H1 (cell line): ENCODE measurements at regions of chr15 and their contacts with region 1.

Region 1: DNA sequence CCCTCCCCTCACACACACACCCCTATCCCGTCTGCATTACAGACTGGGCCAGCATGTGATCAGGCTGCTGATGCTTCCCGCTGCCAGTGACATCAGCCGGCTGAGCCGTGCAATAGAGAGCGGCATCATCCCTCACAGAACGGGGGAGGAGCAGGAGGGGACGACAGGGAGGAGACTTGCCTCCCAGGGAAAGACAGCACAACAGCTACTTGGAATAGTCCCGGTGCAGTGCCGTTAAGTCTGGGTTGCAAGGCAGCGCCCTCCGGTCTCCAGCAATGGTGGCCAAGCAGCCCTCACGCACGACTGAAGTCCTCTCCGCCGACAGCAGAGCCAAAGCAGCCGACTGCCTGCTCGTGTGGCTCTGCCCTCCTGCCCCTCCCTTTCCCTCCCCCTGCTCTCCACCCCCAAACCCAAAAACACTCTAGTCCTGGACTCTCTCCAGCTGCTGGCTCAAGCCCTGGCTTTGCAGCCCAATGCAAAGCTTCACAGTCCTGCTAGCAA is 31.5 kb upstream of the RPS17 start:
- DNase-seq: peak; percentile 43 to 69
- H3K4me3 ChIP-seq: peak overlapping the region; percentile 12 to 50 (median 22); a peak in 6 of 8 replicates
- H3K27ac ChIP-seq: no peak overlapping the region
- H3K4me1 ChIP-seq: peaks cover 9 to 16% (median 11%) of the 10 kb centered on the region in 4 experiments
- H3K27me3 ChIP-seq: no peaks in the 10 kb centered on the region; a peak in 2 of 7 replicates
- CTCF ChIP-seq: no peak
- EP300 ChIP-seq: no peak; a peak in 1 of 3 replicates
- POLR2A ChIP-seq: peak in 1 of 2 experiments; percentile 71; a peak in 1 of 3 replicates
- RAD21 ChIP-seq: no peak

Region 2: GRCh38 chr15:82585072-82585471 is 13.3 kb after region 1 on chr15:
- CTCF ChIA-PET with region 1: interaction called, 14 read pairs
- POLR2A ChIA-PET with region 1: interaction called, 3 read pairs
- DNase-seq: no peak
- H3K4me3 ChIP-seq: no peak overlapping the region; a peak in 1 of 8 replicates
- H3K27ac ChIP-seq: no peak overlapping the region
- H3K4me1 ChIP-seq: peaks cover 0 to 9% (median 5%) of the 10 kb centered on the region in 4 experiments; a peak in 4 of 7 replicates
- H3K27me3 ChIP-seq: no peaks in the 10 kb centered on the region; a peak in 1 of 7 replicates
- CTCF ChIP-seq: peak in 1 of 3 experiments; percentile 41; a peak in 1 of 4 replicates
- EP300 ChIP-seq: no peak
- POLR2A ChIP-seq: no peak
- RAD21 ChIP-seq: peak; percentile 58 to 65

Region 3: DNA sequence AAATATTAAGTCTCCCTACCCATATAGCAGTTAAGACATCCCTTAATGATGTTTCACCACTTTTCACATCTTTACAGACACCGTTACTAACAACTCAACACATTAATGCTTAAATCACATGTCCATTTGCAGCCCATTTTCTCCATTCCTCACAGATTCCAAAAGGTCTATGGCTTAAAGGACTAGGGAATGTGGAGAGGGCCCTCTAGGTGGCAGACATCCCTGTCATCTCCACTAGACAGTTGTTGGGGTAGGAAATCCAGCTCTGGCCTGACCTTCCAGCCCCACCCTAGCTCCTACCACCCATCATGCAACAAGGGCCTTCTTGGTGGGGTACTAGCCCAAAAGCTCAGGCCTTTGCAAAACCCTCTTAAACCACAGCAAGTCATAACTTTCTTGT is 50.2 kb after region 1 on chr15:
- CTCF ChIA-PET with region 1: no interaction called
- POLR2A ChIA-PET with region 1: no interaction called
- DNase-seq: no peak
- H3K4me3 ChIP-seq: no peak overlapping the region
- H3K27ac ChIP-seq: no peak overlapping the region
- H3K4me1 ChIP-seq: no peaks in the 10 kb centered on the region
- H3K27me3 ChIP-seq: no peaks in the 10 kb centered on the region
- CTCF ChIP-seq: peak in 2 of 3 experiments; percentile 36 to 55; a peak in 3 of 4 replicates
- EP300 ChIP-seq: no peak
- POLR2A ChIP-seq: no peak
- RAD21 ChIP-seq: peak; percentile 35 to 39; a peak in 2 of 4 replicates